ENCODE measurements at regions of chr14 and their contacts with region 1.

Region 1: DNA sequence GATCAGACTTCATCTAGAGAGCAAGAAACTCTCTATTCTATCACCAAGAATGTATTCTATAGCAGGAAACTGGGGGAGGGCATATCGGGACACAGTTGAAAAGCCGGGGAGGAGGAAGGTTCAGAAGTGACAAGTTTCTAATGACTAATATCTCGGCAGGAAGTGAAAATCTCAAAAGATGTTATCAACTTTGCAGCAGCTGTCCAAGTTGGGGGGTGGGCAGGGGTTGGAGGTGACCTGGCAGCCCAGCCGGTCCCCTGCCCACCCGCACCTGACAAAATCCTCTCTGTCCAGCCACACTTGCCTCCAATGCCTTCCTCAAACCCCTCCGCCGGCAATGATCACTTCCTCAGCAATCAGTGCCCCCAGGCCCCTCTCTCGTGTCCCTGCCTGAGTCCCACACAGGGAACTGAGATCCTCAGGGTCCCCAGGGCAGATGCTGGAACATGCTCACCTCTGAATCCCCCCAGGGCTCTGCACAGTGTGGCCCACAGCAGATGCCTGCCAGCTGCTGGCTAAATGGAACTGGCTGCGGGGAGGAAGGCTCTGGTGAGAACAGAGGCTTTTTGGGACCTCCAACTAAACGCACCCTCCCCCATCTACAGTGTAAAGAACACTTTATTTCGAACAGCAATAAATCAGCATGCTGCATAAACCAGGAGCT is 43.9 kb downstream of the CCDC88C start:
- DNase-seq: peak; percentile 66
- ATAC-seq: peak; percentile 73
- H3K4me3 Mint-ChIP-seq: peak overlapping the region; percentile 78
- H3K27ac Mint-ChIP-seq: peak overlapping the region; percentile 87
- H3K4me1 Mint-ChIP-seq: peaks cover 98% of the 10 kb centered on the region
- H3K27me3 Mint-ChIP-seq: no peaks in the 10 kb centered on the region
- CTCF ChIP-seq: no peak

Region 2: GRCh38 chr14:91317381-91318308 is 56.1 kb before region 1 on chr14:
- CTCF ChIA-PET with region 1: interaction called, 18 read pairs
- POLR2A ChIA-PET with region 1: interaction called, 21 read pairs
- intact Hi-C with region 1: loop called (anchors 1 kb)
- DNase-seq: peak; percentile 62
- ATAC-seq: peak; percentile 32
- H3K4me3 Mint-ChIP-seq: peak overlapping the region; percentile 70
- H3K27ac Mint-ChIP-seq: peak overlapping the region; percentile 98
- H3K4me1 Mint-ChIP-seq: peaks cover 78% of the 10 kb centered on the region
- H3K27me3 Mint-ChIP-seq: no peaks in the 10 kb centered on the region
- CTCF ChIP-seq: no peak

Region 3: GRCh38 chr14:91350813-91351511 is 22.8 kb before region 1 on chr14:
- CTCF ChIA-PET with region 1: interaction called, 12 read pairs
- POLR2A ChIA-PET with region 1: interaction called, 29 read pairs
- intact Hi-C with region 1: loop called (anchors 1 kb)
- DNase-seq: no peak
- ATAC-seq: peak; percentile 60
- H3K4me3 Mint-ChIP-seq: peak overlapping the region; percentile 81
- H3K27ac Mint-ChIP-seq: peak overlapping the region; percentile 85
- H3K4me1 Mint-ChIP-seq: peaks cover 93% of the 10 kb centered on the region
- H3K27me3 Mint-ChIP-seq: no peaks in the 10 kb centered on the region
- CTCF ChIP-seq: no peak

Region 4: GRCh38 chr14:91356181-91356763 is 17.5 kb before region 1 on chr14:
- CTCF ChIA-PET with region 1: interaction called, 12 read pairs
- POLR2A ChIA-PET with region 1: interaction called, 29 read pairs
- intact Hi-C with region 1: loop called (anchors 1 kb)
- DNase-seq: no peak
- ATAC-seq: peak; percentile 41
- H3K4me3 Mint-ChIP-seq: peak overlapping the region; percentile 74
- H3K27ac Mint-ChIP-seq: peak overlapping the region; percentile 3
- H3K4me1 Mint-ChIP-seq: peaks cover 73% of the 10 kb centered on the region
- H3K27me3 Mint-ChIP-seq: no peaks in the 10 kb centered on the region
- CTCF ChIP-seq: no peak

Region 5: GRCh38 chr14:91388551-91388975 is 14.8 kb after region 1 on chr14:
- CTCF ChIA-PET with region 1: interaction called, 3 read pairs
- POLR2A ChIA-PET with region 1: interaction called, 12 read pairs
- intact Hi-C with region 1: loop called (anchors 1 kb)
- DNase-seq: no peak
- ATAC-seq: peak; percentile 74
- H3K4me3 Mint-ChIP-seq: peak overlapping the region; percentile 28
- H3K27ac Mint-ChIP-seq: peak overlapping the region; percentile 68
- H3K4me1 Mint-ChIP-seq: peaks cover 81% of the 10 kb centered on the region
- H3K27me3 Mint-ChIP-seq: no peaks in the 10 kb centered on the region
- CTCF ChIP-seq: no peak

Region 6: GRCh38 chr14:91396959-91397815 is 23.5 kb after region 1 on chr14:
- CTCF ChIA-PET with region 1: interaction called, 4 read pairs
- POLR2A ChIA-PET with region 1: interaction called, 33 read pairs
- intact Hi-C with region 1: loop called (anchors 1 kb)
- DNase-seq: no peak
- ATAC-seq: peak; percentile 56
- H3K4me3 Mint-ChIP-seq: peak overlapping the region; percentile 66
- H3K27ac Mint-ChIP-seq: peak overlapping the region; percentile 79
- H3K4me1 Mint-ChIP-seq: peaks cover 91% of the 10 kb centered on the region
- H3K27me3 Mint-ChIP-seq: no peaks in the 10 kb centered on the region
- CTCF ChIP-seq: no peak

Region 7: GRCh38 chr14:91418387-91419043 is 44.8 kb after region 1 on chr14:
- CTCF ChIA-PET with region 1: interaction called, 9 read pairs
- POLR2A ChIA-PET with region 1: interaction called, 114 read pairs
- intact Hi-C with region 1: loop called (anchors 1 kb)
- DNase-seq: peak; percentile 84
- ATAC-seq: peak; percentile 37
- H3K4me3 Mint-ChIP-seq: peak overlapping the region; percentile 81
- H3K27ac Mint-ChIP-seq: peak overlapping the region; percentile 93
- H3K4me1 Mint-ChIP-seq: peaks cover 42% of the 10 kb centered on the region
- H3K27me3 Mint-ChIP-seq: no peaks in the 10 kb centered on the region
- CTCF ChIP-seq: peak; percentile 36

Region 8: DNA sequence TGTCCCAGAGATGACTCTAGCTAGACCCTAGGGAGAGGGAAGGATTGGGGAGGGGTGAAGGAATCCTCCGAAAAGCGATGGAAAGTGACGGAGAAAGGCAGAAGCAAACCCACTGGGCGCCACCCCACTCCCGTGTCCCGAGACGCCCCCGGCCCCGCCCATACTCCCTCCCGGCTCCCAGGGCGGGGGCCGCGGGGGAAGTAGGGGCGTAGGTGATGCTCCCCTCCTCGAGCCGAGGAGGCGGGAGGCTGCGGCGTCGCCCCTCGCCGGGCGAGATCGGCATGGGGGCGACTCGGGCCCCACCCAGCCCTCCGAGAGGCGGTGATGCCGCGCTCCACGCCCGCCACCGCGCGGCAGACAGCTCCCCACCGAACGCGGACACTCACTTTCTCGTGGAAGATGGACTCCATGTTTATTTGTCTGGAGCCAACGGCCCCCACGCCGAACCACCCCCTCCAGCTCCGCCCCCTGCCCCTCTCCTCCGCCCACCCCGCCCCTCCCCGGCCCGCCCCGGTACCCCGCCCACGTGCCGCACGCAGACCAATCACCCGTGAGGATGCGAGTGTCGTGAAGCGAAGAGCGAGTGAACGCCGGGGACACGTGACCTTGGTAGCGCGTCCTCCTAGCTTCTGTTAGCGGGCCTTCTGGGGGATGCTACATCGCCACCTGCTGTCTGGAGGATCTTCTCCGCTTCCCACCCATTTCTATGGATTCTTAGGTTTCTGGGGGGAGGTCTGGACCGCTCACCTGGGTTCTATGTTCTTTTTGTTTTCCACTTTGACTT is 732.6 kb after region 1 on chr14 and contains the start of gene ATXN3:
- CTCF ChIA-PET with region 1: no interaction called
- POLR2A ChIA-PET with region 1: no interaction called
- intact Hi-C with region 1: no loop called
- DNase-seq: peak; percentile 81
- ATAC-seq: peak; percentile 91
- H3K4me3 Mint-ChIP-seq: peak within 1 kb of the TSS; percentile 100
- H3K27ac Mint-ChIP-seq: peak within 1 kb of the TSS; percentile 92
- H3K4me1 Mint-ChIP-seq: peaks cover 46% of the 10 kb centered on the region
- H3K27me3 Mint-ChIP-seq: no peaks in the 10 kb centered on the region
- CTCF ChIP-seq: no peak
- total RNA-seq, gene ATXN3: 23.8 and 29.3 TPM in 2 replicates